Mammary epithelial cell (primary cell): ENCODE measurements at regions of chr10 and their contacts with region 1.

Region 1: DNA sequence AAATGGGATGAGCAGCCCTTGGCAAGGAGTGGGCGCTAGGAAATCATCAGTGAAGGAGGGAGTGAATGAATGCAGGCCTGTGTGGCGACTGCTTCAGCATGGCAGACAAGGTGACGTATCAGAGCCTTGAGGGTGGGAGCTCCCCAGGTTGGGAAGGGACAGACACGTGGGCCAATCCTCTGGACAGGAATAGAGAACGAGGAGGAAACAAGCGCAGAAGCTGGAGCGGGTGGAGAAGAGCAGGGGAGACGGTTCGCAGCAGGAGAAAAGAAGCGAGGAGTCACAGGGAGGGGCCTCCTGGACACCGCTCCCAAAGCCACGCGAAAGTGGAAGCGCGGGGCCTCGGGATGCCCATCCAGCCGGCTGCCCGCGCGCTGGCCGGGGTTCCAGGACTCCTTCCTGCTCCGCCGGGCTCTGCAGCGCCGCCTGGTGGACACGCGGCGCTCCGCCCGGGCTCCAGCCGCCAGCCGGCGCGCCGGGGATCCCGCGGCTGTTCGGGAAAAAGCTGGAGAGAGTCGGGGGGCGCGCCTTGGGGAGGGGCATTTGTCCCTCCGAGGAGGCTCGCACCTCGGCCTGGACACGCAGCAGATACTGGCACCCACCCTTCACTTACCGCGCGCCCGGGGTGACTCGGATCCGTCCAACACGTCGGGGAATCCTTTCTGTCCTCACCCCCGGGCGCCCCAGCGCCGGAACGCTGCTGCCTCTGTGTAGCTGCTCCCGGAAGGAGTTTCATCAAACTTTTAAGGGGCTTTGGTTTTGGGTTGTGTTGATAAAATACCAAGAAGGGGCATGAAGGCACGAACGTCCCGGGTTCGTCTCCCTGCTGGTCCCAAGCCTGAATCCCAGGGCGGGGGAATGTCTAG is 6.3 kb downstream of the ZNF503 start:
- DNase-seq: peak; percentile 26
- H3K4me3 ChIP-seq: peak overlapping the region in 2 of 3 experiments; percentile 6 to 98
- H3K27ac ChIP-seq: peak overlapping the region; percentile 10
- H3K4me1 ChIP-seq: peaks cover 10% of the 10 kb centered on the region
- H3K27me3 ChIP-seq: no peaks in the 10 kb centered on the region
- CTCF ChIP-seq: peak; percentile 53 to 74

Region 2: GRCh38 chr10:75294866-75295701 is 100.2 kb before region 1 on chr10:
- CTCF ChIA-PET with region 1: no interaction called
- dilution Hi-C with region 1: no loop called
- in situ Hi-C with region 1: no loop called
- intact Hi-C with region 1: loop called (anchors 2 kb)
- DNase-seq: peak; percentile 94
- H3K4me3 ChIP-seq: peak overlapping the region; percentile 4 to 54 (median 48)
- H3K27ac ChIP-seq: peak overlapping the region; percentile 51
- H3K4me1 ChIP-seq: peaks cover 14% of the 10 kb centered on the region
- H3K27me3 ChIP-seq: no peaks in the 10 kb centered on the region
- CTCF ChIP-seq: peak in 1 of 2 donors; percentile 28

Region 3: GRCh38 chr10:75304741-75305380 is 90.4 kb before region 1 on chr10:
- CTCF ChIA-PET with region 1: interaction called, 4 read pairs
- dilution Hi-C with region 1: loop called (anchors 5 kb)
- in situ Hi-C with region 1: no loop called
- intact Hi-C with region 1: no loop called
- DNase-seq: no peak
- H3K4me3 ChIP-seq: no peak overlapping the region
- H3K27ac ChIP-seq: no peak overlapping the region
- H3K4me1 ChIP-seq: no peaks in the 10 kb centered on the region
- H3K27me3 ChIP-seq: no peaks in the 10 kb centered on the region
- CTCF ChIP-seq: no peak

Region 4: DNA sequence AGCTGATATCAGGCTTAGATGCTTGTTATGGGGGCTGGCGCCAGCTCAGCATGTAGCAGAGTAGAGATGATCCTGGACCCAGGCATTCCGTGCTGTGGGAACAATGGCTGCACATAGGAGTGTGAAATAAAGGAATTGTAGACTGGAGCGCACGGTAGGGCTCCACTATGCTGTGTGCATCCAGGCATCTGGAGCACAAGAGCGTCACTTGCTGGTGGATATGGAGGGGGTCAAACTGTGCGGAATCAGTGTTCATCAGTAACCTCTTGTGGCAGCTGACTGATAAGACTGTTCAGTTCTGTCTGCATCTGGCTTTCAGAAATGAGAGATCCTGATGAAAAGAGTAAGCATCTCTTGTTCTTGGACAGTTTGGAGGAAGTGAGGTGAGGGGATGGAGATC is 49.6 kb before region 1 on chr10:
- CTCF ChIA-PET with region 1: interaction called, 10 read pairs
- dilution Hi-C with region 1: no loop called
- in situ Hi-C with region 1: no loop called
- intact Hi-C with region 1: loop called (anchors 2 kb)
- DNase-seq: no peak
- H3K4me3 ChIP-seq: no peak overlapping the region
- H3K27ac ChIP-seq: no peak overlapping the region
- H3K4me1 ChIP-seq: peaks cover 6% of the 10 kb centered on the region
- H3K27me3 ChIP-seq: no peaks in the 10 kb centered on the region
- CTCF ChIP-seq: no peak

Region 5: DNA sequence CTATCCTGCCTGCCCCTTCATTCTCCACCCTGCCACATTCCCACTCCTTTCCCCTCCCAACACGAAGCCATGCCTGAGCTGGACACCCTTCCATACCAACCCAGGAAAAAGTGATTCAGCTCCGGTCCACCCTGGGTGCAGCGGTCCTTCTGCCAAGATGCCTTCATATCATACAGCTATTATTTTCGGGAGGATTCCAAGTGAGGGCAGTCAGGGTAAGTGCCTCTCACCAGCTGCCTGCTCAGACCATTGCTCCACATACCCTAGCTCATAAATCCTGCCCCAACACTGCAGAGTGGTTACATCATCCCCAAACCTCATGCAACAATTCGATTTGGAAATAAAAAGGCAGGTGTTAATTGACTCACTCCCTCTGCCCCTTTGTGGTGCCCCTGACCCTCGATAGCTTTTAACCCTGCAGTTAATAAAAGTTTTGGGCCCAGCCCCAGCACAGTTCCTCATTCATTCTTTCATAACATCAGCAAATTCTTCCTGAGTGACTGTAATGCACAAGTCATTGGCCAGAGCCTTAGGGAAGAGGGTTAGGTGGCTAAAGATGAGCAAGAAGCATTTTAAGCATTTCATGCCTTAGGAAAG is 36.4 kb before region 1 on chr10:
- CTCF ChIA-PET with region 1: interaction called, 13 read pairs
- dilution Hi-C with region 1: no loop called
- in situ Hi-C with region 1: no loop called
- intact Hi-C with region 1: loop called (anchors 2 kb)
- DNase-seq: peak; percentile 94
- H3K4me3 ChIP-seq: no peak overlapping the region
- H3K27ac ChIP-seq: peak overlapping the region; percentile 53
- H3K4me1 ChIP-seq: peaks cover 23% of the 10 kb centered on the region
- H3K27me3 ChIP-seq: no peaks in the 10 kb centered on the region
- CTCF ChIP-seq: no peak